Astrocyte of the cerebellum (primary cell): ENCODE measurements at regions of chr7 and their contacts with region 1.

Region 1: DNA sequence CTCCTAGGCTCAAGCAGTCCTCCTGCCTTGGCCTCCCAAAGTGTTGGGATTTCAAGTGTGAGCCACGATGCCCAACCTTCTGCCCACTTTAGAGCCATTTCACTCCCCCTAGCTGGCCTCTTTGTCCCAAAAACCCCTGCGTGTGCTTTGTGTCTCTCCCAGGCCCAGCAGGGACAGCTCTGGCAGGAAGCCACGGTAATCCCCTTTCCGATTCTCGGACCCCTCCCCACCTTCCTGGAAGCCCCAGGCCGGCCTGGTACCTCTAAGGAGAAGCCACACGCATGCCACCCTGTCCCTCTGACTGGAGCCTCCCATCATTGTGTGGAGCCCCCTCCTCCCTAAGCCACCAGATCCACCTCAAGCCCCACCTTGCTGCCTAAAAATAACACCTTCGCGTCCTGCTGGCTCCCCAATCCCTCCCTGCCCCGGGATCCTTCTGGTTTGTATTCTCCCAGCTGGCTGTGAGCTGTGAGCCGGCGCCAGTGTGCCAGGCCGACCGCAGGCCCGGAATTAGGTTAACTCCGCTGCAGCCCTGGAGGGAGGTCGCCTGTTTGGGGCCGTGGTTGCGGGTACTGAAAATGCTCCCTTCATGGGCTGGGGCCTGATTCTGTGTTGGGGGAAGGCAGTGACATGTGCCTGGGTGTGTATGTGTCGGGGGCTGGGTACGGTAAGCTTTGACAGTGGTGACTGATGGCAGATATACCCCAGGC is 16.4 kb upstream of the SRRM3 start:
- DNase-seq: no peak
- H3K4me3 ChIP-seq: no peak overlapping the region
- CTCF ChIP-seq: no peak

Region 2: GRCh38 chr7:76244781-76245391 is 59.5 kb after region 1 on chr7:
- in situ Hi-C with region 1: loop called (anchors 10 kb)
- DNase-seq: no peak
- H3K4me3 ChIP-seq: no peak overlapping the region
- CTCF ChIP-seq: no peak

Region 3: DNA sequence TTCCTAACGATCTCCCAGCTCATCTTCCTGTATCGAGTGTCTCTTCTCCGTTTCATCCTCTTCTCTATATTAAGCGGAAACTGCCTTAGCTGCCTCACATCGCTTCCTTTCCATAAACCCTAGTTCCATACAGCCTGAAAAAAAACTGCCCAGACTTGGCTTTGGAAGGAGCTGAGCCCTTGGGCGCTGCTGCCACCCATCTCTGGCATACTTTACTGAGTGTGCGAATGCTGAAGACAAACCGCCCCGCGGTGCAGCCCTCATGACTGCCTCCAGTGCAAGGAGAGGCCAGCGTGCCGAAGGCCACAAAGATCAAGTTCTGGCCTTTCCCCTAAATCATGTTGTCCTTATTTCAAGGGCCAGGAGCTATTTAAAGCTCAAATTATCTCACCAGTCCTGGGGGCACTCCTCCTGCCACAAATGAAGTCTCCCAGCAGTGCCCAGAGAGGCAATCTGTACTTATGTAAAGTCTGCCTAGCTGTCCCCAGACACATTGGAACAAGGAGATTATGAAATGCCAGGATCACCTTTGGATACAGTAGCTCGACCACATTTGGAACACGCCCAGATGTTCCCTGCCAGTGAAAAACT is 148.3 kb after region 1 on chr7:
- in situ Hi-C with region 1: loop called (anchors 10 kb)
- DNase-seq: no peak
- H3K4me3 ChIP-seq: no peak overlapping the region
- CTCF ChIP-seq: no peak